SK-N-SH (cell line): ENCODE measurements at regions of chr7 and their contacts with region 1.

Region 1: GRCh38 chr7:106056513-106057203 is 55.5 kb downstream of the SYPL1 start:
- DNase-seq: peak; percentile 88
- H3K4me3 ChIP-seq: no peak overlapping the region
- H3K27ac ChIP-seq: peak overlapping the region in 1 of 2 experiments; percentile 96; a peak in 2 of 4 replicates
- H3K4me1 ChIP-seq: peaks cover 0 to 28% of the 10 kb centered on the region in 2 experiments; a peak in 2 of 4 replicates
- H3K27me3 ChIP-seq: no peaks in the 10 kb centered on the region
- CTCF ChIP-seq: peak; percentile 95
- EP300 ChIP-seq: 0 out of 4 replicates have a peak, but pooled peaks of 1 of the 2 experiments have one; percentile 26
- RAD21 ChIP-seq: peak; percentile 100

Region 2: DNA sequence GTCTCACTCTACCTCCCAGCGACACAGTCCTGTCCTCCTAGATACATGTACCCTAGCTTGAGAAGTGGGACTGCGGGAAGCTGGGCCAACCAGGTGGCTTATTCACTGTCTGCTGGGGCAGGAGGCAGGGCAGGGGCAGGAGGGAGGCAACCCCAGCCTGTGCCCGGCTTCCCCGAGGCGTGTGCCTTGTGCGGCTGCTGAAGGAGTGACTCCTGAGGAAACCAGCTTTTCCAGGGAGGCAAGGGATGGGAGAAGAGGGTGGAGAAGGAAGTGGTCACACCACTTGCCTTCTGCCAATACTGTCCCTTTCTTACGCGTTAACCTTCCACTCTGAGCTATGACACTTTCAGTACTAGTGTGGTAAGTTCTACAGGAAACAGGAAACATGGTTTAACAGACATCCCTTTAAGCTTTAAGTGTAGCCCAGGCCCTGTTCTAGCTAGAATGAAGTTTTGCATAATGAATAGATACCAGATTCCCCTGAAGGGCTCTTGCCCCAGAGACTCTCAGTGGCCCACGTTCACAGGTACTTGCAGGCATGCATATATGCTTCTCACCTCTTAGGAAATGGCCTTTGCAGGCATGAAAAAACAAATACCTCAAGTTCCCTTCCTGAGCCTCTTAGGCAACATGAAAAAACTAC is 14.8 kb after region 1 on chr7:
- CTCF ChIA-PET with region 1: interaction called, 76 read pairs
- POLR2A ChIA-PET with region 1: interaction called, 9 read pairs
- DNase-seq: peak; percentile 49
- H3K4me3 ChIP-seq: no peak overlapping the region
- H3K27ac ChIP-seq: peak overlapping the region in 1 of 2 experiments; percentile 81; a peak in 2 of 4 replicates
- H3K4me1 ChIP-seq: peaks cover 20 to 61% of the 10 kb centered on the region in 2 experiments
- H3K27me3 ChIP-seq: no peaks in the 10 kb centered on the region
- CTCF ChIP-seq: no peak
- EP300 ChIP-seq: no peak
- RAD21 ChIP-seq: no peak

Region 3: DNA sequence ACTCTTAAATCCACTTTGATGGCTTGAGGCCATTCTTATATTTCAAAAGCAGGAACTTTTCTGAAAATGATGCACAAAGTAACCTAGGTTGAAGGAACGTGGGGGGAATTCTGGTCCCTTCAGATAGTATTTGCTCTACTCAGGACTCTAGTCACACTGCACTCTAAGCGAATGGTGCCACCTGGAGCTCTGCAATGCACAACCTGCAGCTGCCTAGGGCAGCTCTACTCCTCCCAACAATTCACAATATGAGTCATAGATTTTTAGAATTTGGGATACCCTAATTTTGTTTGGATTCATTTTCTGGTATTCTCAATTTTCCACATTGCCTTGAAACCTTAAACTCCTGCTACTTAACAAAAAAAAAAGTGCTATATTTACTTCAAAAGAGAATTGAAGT is 38.1 kb after region 1 on chr7:
- CTCF ChIA-PET with region 1: interaction called, 17 read pairs
- POLR2A ChIA-PET with region 1: no interaction called
- DNase-seq: no peak
- H3K4me3 ChIP-seq: no peak overlapping the region
- H3K27ac ChIP-seq: no peak overlapping the region
- H3K4me1 ChIP-seq: no peaks in the 10 kb centered on the region; a peak in 2 of 4 replicates
- H3K27me3 ChIP-seq: no peaks in the 10 kb centered on the region
- CTCF ChIP-seq: no peak
- EP300 ChIP-seq: no peak
- RAD21 ChIP-seq: peak; percentile 37

Region 4: DNA sequence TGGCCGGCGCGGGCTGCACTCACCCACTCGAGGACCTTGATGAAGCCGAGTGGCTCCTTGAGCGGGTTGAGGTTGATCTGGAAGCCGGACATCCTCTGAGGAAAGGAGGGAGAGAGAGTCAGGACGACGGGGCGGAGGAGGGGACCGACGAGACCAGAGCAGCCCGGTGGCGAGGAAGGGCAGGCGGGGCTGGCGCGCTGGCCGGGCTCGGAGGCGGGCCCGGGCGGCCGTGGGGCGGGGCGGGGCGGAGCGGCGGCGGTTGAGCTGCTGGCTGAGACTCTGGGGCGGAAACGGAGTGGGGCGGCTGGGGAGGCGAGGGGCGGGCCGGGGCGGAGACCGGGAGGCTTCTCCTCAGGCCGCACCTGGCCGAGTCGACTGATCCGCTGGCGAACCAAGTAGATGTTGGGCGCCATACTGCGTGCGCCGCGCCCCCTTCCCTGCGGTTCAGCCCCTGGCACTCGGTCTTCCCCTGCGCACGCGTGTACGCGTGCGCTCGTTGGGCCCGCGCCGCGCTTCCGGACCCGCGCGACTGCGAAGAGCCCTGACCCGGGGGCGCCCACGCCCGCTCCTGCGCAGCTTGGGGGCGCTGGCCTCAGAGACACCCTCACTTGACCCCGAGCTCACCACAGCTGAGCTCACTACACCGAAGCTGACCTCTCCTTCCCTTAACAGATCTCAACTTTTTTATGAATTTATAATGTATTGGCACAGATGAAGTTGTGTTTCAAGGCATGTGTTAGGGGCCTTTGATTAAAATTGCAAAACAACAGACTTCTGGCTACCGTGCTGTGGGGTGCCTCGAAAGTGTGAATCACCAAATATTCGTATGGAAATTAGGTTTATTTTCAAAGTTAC is 55.7 kb after region 1 on chr7 and contains the start of gene SYPL1:
- CTCF ChIA-PET with region 1: interaction called, 37 read pairs
- POLR2A ChIA-PET with region 1: interaction called, 26 read pairs
- DNase-seq: peak; percentile 99
- H3K4me3 ChIP-seq: peak within 1 kb of the TSS; percentile 80 to 91
- H3K27ac ChIP-seq: peak within 1 kb of the TSS; percentile 91 to 95
- H3K4me1 ChIP-seq: peaks cover 14 to 21% of the 10 kb centered on the region in 2 experiments; a peak in 3 of 4 replicates
- H3K27me3 ChIP-seq: no peaks in the 10 kb centered on the region
- CTCF ChIP-seq: peak; percentile 39
- EP300 ChIP-seq: no peak; a peak in 1 of 4 replicates
- RAD21 ChIP-seq: peak; percentile 9; the same call in 1 of the 2 replicates
- polyA plus RNA-seq, gene SYPL1: 72.4 and 98.7 TPM in 2 replicates

Region 5: DNA sequence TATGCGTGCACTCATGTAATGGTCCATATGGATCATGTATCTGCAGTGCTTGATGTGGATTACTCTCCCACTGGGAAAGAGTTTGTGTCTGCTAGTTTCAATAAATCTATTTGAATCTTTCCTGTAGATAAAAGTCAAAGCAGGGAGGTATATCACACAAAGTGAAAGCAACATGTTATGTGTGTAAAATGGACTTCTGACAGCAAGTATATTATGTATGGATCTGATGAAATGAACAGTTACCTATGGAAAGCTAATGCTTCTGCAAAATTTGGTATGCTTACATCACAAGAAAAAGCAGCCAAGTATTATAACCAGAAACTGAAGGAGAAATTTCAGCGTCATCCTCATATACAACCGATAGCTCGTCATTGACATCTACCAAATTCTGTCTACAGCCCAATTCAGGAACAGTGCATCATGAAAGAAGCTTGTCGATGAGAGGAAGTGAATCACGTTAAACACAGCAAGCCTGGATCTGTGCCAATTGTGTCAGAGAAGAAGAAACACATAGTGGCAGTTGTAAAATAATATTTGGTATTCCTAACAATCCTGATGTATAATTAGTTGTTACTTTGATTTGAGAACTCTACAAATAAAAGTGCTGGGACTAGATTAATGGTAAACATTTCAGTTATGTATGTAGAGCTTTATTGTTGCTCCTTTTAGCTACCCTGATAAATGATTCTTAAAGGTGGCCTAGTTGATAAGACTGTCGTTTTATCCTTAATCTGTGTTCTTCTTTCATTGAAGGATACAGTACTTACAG is 69.7 kb after region 1 on chr7:
- CTCF ChIA-PET with region 1: interaction called, 10 read pairs
- POLR2A ChIA-PET with region 1: no interaction called
- DNase-seq: no peak
- H3K4me3 ChIP-seq: no peak overlapping the region
- H3K27ac ChIP-seq: no peak overlapping the region
- H3K4me1 ChIP-seq: peaks cover 0 to 12% of the 10 kb centered on the region in 2 experiments; a peak in 1 of 4 replicates
- H3K27me3 ChIP-seq: no peaks in the 10 kb centered on the region
- CTCF ChIP-seq: no peak
- EP300 ChIP-seq: no peak
- RAD21 ChIP-seq: no peak